ENCODE measurements at regions of chr14 and their contacts with region 1.

Region 1: GRCh38 chr14:24135834-24136542 is at the start of gene PSME1:
- DNase-seq: peak; percentile 96
- ATAC-seq: peak; percentile 97
- H3K4me3 ChIP-seq: peak within 1 kb of the TSS; percentile 54 to 96 (median 78)
- H3K4me3 Mint-ChIP-seq: peak within 1 kb of the TSS; percentile 92
- H3K27ac ChIP-seq: peak within 1 kb of the TSS; percentile 87 to 97
- H3K27ac Mint-ChIP-seq: peak within 1 kb of the TSS; percentile 94
- H3K4me1 ChIP-seq: peaks cover 33 to 43% of the 10 kb centered on the region in 2 donors
- H3K4me1 Mint-ChIP-seq: peaks cover 57% of the 10 kb centered on the region
- H3K27me3 ChIP-seq: no peaks in the 10 kb centered on the region
- H3K27me3 Mint-ChIP-seq: no peaks in the 10 kb centered on the region
- CTCF ChIP-seq: no peak
- total RNA-seq, gene PSME1: 227 and 237 TPM in 2 replicates

Region 2: DNA sequence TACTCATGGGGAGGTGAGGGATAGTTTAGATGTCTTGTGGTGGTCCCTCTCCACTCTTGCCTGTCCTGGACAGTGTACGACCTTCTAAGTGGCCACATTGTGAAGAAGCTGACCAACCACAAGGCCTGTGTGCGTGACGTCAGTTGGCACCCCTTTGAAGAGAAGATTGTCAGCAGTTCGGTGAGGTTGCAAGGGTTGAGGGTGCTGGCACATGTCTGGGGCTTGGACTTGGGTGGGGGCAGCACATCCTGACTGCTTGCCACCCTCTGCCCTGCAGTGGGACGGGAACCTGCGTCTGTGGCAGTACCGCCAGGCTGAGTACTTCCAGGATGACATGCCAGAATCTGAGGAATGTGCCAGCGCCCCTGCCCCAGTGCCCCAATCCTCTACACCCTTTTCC is 13.1 kb before region 1 on chr14:
- CTCF ChIA-PET with region 1: interaction called, 4 read pairs
- POLR2A ChIA-PET with region 1: interaction called, 10 read pairs
- intact Hi-C with region 1: no loop called
- DNase-seq: no peak
- ATAC-seq: no peak
- H3K4me3 ChIP-seq: no peak overlapping the region
- H3K4me3 Mint-ChIP-seq: no peak overlapping the region
- H3K27ac ChIP-seq: peak overlapping the region; percentile 30 to 92
- H3K27ac Mint-ChIP-seq: peak overlapping the region; percentile 91
- H3K4me1 ChIP-seq: peaks cover 30 to 31% of the 10 kb centered on the region in 2 donors
- H3K4me1 Mint-ChIP-seq: peaks cover 32% of the 10 kb centered on the region
- H3K27me3 ChIP-seq: no peaks in the 10 kb centered on the region
- H3K27me3 Mint-ChIP-seq: no peaks in the 10 kb centered on the region
- CTCF ChIP-seq: no peak

Region 3: GRCh38 chr14:24232121-24232644 is 96.2 kb after region 1 on chr14 and contains the start of gene NEDD8:
- CTCF ChIA-PET with region 1: no interaction called
- POLR2A ChIA-PET with region 1: no interaction called
- intact Hi-C with region 1: no loop called
- DNase-seq: peak; percentile 95
- ATAC-seq: peak; percentile 86
- H3K4me3 ChIP-seq: peak within 1 kb of the TSS; percentile 75 to 100 (median 97)
- H3K4me3 Mint-ChIP-seq: peak within 1 kb of the TSS; percentile 96
- H3K27ac ChIP-seq: peak within 1 kb of the TSS; percentile 36 to 67
- H3K27ac Mint-ChIP-seq: peak within 1 kb of the TSS; percentile 95
- H3K4me1 ChIP-seq: peaks cover 18 to 24% of the 10 kb centered on the region in 2 donors
- H3K4me1 Mint-ChIP-seq: peaks cover 55% of the 10 kb centered on the region
- H3K27me3 ChIP-seq: no peaks in the 10 kb centered on the region
- H3K27me3 Mint-ChIP-seq: no peaks in the 10 kb centered on the region
- CTCF ChIP-seq: no peak
- total RNA-seq, gene NEDD8: 86.6 and 98.5 TPM in 2 replicates